ENCODE measurements at regions of chr16 and their contacts with region 1.

Region 1: DNA sequence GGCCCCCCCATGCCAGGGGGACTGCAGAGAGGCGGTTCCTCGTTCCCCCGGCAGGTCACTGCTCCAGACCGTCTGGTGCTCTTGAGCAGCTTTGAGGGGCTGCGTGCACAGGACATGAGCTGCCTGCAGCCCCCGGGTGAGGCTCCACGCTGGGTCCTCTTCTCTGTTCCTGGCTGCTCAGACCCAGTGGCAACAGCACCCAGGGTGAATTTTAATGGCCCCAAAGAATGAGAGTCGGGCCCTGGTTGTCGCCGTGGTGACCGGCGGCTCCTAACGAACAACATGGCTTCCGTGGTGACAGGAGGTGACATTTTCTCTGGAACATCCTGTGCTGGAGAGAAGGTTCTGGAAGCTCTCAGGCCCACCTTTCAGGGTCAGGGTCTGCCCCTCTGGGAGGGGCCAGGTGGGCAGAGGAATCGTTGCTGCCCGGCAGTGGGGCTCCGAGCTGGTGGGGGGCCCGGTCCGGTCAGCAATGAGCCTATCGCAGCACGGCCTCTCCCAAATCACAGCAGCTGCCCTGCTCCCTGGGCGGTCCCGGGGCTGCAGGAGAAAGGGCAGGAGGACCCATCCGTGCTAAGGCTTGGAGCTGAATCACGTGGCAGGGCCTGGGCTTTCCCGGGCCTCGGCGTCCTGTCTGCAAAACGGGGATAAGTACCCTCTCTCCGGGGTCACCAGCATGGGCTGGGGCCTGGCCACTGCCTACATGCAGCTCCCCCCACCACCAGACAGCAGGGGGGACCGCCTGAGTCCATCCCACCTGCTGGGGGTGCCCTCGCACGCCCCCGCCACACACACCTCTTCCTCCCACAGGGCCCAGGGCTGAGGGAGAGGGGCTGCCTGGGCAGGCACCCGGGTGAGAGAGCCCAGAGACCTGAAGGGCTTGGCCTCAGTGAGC is 3.4 kb upstream of the C1QTNF8 start:
- DNase-seq: no peak
- ATAC-seq: no peak
- H3K4me3 ChIP-seq: no peak overlapping the region
- H3K27ac ChIP-seq: peak overlapping the region in 8 of 12 donors; percentile 78 to 93 (median 87)
- H3K4me1 ChIP-seq: peaks cover 0 to 40% (median 19%) of the 10 kb centered on the region in 12 donors
- H3K27me3 ChIP-seq: peaks cover 8 to 47% (median 15%) of the 10 kb centered on the region in 9 donors
- CTCF ChIP-seq: no peak
- POLR2A ChIP-seq: no peak

Region 2: DNA sequence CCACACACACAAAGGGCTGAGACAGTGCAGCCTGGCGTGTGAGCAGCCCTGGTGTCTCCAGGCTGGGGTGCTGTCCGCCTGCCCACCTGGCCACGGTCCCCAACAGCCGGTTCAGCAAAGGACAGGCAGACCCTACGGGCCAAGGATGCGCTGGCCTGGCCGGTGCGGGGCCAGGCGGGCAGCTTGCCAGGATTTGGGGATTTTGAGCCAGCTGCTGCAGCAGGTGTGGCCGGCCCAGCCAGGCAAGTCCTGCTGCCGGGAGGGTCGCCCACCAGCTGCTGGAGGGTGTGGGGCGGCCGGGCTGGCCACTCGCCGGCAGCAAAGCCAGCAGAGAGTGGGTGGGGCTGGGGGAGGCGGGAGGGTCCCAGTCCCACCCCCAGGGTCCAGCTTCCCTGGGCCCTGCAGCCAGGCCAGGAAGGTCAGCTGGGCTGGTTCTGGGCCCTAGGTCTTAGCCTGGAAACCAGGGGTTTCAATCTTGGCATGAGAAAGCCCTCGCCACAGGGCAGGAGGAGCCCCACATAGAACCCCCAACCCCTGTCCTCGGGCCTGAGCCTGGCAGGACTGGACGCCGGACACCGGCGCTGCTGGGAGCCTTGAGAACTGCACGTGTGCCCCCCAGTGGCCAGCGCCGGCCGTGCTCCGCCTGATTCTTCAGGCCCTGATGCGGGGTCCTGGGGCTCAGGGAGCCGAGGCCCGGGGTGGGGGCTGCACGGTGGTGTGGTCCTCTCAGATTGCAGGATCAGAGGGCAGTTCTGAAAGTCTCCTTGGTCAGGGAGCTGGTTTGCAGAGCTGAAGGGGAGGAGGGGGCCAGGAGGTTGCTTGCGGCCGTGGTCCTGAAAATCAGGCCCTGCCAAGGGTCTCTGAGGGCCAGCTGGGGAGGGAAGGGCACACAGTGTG is 44.5 kb before region 1 on chr16:
- intact Hi-C with region 1: loop called in 5 of 10 experiments (anchors 1 to 2 kb)
- DNase-seq: peak in 4 of 5 donors; percentile 51 to 75 (median 56)
- ATAC-seq: peak; percentile 30 to 83 (median 72)
- H3K4me3 ChIP-seq: no peak overlapping the region
- H3K27ac ChIP-seq: no peak overlapping the region
- H3K4me1 ChIP-seq: peaks cover 0 to 6% (median 0%) of the 10 kb centered on the region in 12 donors
- H3K27me3 ChIP-seq: peaks cover 0 to 42% (median 7%) of the 10 kb centered on the region in 9 donors
- CTCF ChIP-seq: peak; percentile 65 to 86 (median 80)
- POLR2A ChIP-seq: no peak

Region 3: GRCh38 chr16:1078579-1079021 is 20.8 kb before region 1 on chr16:
- intact Hi-C with region 1: loop called in 3 of 10 experiments (anchors 1 to 2 kb)
- DNase-seq: no peak
- ATAC-seq: no peak
- H3K4me3 ChIP-seq: no peak overlapping the region
- H3K27ac ChIP-seq: no peak overlapping the region
- H3K4me1 ChIP-seq: peaks cover 0 to 3% (median 0%) of the 10 kb centered on the region in 12 donors
- H3K27me3 ChIP-seq: peaks cover 20 to 88% (median 31%) of the 10 kb centered on the region in 9 donors
- CTCF ChIP-seq: no peak
- POLR2A ChIP-seq: no peak